Prostate gland (tissue), 2 donors: ENCODE measurements at regions of chr6 and their contacts with region 1.

Region 1: DNA sequence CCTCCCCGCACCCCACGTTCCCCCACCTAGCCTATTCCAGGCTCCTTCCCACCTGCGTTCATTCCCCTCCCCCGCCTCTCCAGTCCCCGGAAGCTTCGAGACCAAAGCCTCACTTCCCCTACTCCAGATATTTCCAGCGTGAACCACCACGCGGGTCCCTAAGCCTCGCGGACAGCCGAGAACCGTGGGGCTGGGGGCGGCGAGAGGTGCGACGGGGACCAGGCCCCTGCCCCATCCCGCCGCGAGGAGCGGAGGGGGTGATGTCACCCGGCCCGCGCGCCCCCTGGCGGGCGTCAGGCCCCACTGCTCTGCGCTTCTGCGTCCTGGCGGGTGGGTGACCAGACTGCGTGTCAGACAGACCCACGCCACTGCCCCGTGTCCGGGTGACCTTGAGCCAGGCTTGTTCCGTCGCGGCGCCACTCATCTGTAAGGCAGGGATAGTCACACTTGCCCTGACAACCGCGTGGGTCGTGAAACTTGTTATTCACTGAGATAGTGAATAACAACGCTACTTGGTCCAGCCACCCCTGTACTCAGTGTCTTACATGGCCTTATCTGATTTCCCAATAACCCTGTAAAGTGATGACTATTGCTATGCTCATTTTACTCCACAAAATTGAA is 9.0 kb upstream of the HSP90AB1 start:
- DNase-seq: peak; percentile 79
- H3K4me3 ChIP-seq: peak overlapping the region; percentile 58 to 62
- H3K27ac ChIP-seq: peak overlapping the region; percentile 97 to 98
- H3K4me1 ChIP-seq: peaks cover 15% of the 10 kb centered on the region
- H3K27me3 ChIP-seq: no peaks in the 10 kb centered on the region
- CTCF ChIP-seq: peak; percentile 97 to 99 (median 99)
- POLR2A ChIP-seq: peak; percentile 6

Region 2: GRCh38 chr6:44096612-44097011 is 141.3 kb before region 1 on chr6:
- intact Hi-C with region 1: loop called (anchors 5 kb)
- DNase-seq: peak; percentile 67
- H3K4me3 ChIP-seq: no peak overlapping the region
- H3K27ac ChIP-seq: no peak overlapping the region
- H3K4me1 ChIP-seq: no peaks in the 10 kb centered on the region
- H3K27me3 ChIP-seq: no peaks in the 10 kb centered on the region
- CTCF ChIP-seq: peak; percentile 58 to 89 (median 76)
- POLR2A ChIP-seq: no peak

Region 3: DNA sequence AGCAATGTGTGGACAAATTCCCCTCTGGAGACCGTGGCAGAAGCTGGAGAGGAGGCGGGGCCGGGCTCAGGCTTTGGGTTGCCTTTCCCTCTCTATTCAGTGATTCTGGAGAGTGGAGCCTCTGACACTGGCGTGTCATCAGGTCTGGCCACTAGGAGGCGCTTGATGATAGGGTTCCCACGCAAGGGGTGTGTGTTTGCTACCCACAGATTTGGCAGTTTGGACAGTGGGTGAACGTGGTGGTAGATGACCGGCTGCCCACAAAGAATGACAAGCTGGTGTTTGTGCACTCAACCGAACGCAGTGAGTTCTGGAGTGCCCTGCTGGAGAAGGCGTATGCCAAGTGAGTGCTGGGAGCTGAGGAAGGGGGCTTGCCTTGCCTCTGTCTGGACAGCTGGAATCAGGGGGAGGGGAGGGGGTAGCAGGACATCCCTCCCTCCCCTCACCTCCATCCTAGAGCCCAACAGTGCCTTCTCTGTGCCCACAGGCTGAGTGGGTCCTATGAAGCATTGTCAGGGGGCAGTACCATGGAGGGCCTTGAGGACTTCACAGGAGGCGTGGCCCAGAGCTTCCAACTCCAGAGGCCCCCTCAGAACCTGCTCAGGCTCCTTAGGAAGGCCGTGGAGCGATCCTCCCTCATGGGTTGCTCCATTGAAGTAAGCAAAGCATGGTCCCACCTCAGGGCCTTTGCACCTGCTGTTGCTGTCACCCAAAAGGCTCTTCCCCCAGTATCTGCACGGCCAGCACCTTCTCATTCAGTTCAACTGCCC is 65.0 kb before region 1 on chr6:
- intact Hi-C with region 1: loop called (anchors 1 kb)
- DNase-seq: peak; percentile 81
- H3K4me3 ChIP-seq: no peak overlapping the region
- H3K27ac ChIP-seq: no peak overlapping the region
- H3K4me1 ChIP-seq: no peaks in the 10 kb centered on the region
- H3K27me3 ChIP-seq: no peaks in the 10 kb centered on the region
- CTCF ChIP-seq: peak; percentile 76 to 94 (median 92)
- POLR2A ChIP-seq: no peak

Region 4: GRCh38 chr6:44219053-44219814 is 18.7 kb before region 1 on chr6:
- intact Hi-C with region 1: loop called (anchors 2 kb)
- DNase-seq: peak; percentile 54
- H3K4me3 ChIP-seq: peak overlapping the region; percentile 21 to 39
- H3K27ac ChIP-seq: peak overlapping the region; percentile 35 to 70
- H3K4me1 ChIP-seq: peaks cover 17% of the 10 kb centered on the region
- H3K27me3 ChIP-seq: no peaks in the 10 kb centered on the region
- CTCF ChIP-seq: peak in 2 of 4 experiments; percentile 6 to 7
- POLR2A ChIP-seq: peak; percentile 56